ENCODE measurements at regions of chr21 and their contacts with region 1.

Region 1: GRCh38 chr21:33348706-33349105 is 23.9 kb downstream of the IFNAR1 start:
- DNase-seq: no peak
- ATAC-seq: no peak
- H3K4me3 ChIP-seq: no peak overlapping the region
- H3K4me3 Mint-ChIP-seq: no peak overlapping the region
- H3K27ac ChIP-seq: no peak overlapping the region
- H3K27ac Mint-ChIP-seq: peak overlapping the region in 1 of 2 donors; percentile 28
- H3K4me1 ChIP-seq: peaks cover 6 to 11% of the 10 kb centered on the region in 2 experiments
- H3K4me1 Mint-ChIP-seq: peaks cover 19 to 30% (median 24%) of the 10 kb centered on the region in 3 donors
- H3K27me3 ChIP-seq: no peaks in the 10 kb centered on the region
- H3K27me3 Mint-ChIP-seq: no peaks in the 10 kb centered on the region

Region 2: DNA sequence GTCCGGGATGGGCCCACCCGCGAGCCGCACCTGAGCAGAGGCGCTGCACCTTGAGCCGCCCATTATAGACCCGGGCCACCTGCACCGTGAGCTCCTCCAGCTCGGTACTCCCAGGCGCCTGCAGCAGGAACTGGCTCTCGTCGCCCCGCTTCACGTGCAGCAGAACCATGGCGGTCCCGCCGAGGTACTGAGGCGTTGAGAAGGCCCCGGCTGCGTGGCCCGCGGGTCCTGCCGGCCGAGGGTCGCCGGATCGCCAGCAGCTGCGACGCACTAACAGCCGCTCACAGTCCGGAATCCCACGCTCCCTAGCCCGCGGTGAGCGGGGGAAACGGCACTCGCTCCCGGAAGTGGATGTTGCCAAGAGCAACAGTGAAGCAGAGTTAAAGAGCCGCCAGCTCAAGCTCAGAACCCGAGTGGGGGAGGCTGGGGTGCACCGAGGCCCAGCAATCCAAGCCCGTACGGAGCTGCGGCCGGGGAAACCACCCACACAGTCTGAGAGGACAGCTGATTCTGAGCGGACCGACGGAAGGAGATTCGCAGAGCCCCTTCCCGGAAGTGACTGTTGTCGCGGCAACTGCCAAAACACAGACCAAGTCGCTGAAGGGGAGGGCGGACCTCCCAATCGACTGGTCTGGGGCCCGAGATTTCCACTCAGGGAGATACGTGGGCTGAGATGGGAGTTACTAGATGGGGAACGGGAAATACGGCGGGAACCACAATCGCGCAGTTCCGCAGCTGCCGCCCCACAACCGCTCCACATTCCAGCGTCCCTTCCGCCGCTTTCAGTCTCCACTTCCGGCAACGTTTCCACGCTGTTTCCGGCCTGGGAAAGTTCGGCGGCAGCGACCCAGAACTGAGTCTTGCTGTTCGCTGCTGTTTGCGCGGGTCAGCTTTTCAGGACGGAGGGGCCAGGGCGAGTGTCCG is 736.4 kb before region 1 on chr21 and contains the start of gene CFAP298:
- CTCF ChIA-PET with region 1: interaction called in 1 of 2 experiments, 11 read pairs
- POLR2A ChIA-PET with region 1: no interaction called
- DNase-seq: peak; percentile 77 to 95 (median 89)
- ATAC-seq: peak; percentile 80 to 92 (median 86)
- H3K4me3 ChIP-seq: peak within 1 kb of the TSS; percentile 96 to 99
- H3K4me3 Mint-ChIP-seq: peak within 1 kb of the TSS; percentile 91 to 99 (median 97)
- H3K27ac ChIP-seq: peak within 1 kb of the TSS; percentile 81
- H3K27ac Mint-ChIP-seq: peak within 1 kb of the TSS; percentile 90 to 95
- H3K4me1 ChIP-seq: peaks cover 11 to 27% of the 10 kb centered on the region in 2 experiments
- H3K4me1 Mint-ChIP-seq: peaks cover 0 to 24% (median 20%) of the 10 kb centered on the region in 3 donors
- H3K27me3 ChIP-seq: no peaks in the 10 kb centered on the region
- H3K27me3 Mint-ChIP-seq: no peaks in the 10 kb centered on the region
- total RNA-seq, gene CFAP298: 19.5 to 36.8 (median 32.1) TPM

Region 3: GRCh38 chr21:34227386-34227852 is 878.7 kb after region 1 on chr21:
- CTCF ChIA-PET with region 1: no interaction called
- POLR2A ChIA-PET with region 1: no interaction called
- DNase-seq: no peak
- ATAC-seq: no peak
- H3K4me3 ChIP-seq: no peak overlapping the region
- H3K4me3 Mint-ChIP-seq: no peak overlapping the region
- H3K27ac ChIP-seq: no peak overlapping the region
- H3K27ac Mint-ChIP-seq: no peak overlapping the region
- H3K4me1 ChIP-seq: no peaks in the 10 kb centered on the region
- H3K4me1 Mint-ChIP-seq: no peaks in the 10 kb centered on the region
- H3K27me3 ChIP-seq: no peaks in the 10 kb centered on the region
- H3K27me3 Mint-ChIP-seq: peaks cover 0 to 4% of the 10 kb centered on the region in 2 donors

Measured in T-cell (primary cell).